ENCODE measurements at regions of chr4 and their contacts with region 1.

Region 1: DNA sequence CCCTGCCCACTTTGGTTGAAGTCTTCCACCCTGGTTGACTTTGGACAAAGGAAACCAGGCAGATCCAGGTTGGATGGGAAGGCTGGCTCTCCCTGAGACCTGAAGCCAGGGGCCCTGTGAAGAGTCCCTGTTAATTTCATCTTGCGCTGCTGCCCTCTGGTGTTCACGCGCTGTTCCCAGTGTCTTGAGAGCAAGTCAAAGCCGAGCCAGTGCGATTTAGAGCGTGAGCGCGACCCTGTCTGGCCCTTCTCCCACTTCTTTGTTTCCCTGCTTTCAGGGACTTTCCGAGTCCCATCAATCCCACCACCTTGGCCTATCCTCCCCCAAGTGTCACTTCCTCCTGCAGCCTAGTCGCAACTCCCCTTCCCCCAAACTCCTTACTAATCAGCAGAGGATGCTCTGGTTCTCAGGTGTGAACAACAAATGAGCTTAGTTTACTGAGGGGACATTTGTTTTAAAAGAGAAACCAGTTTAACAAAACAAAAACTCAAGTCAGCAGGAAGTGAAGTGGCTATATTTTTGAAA is 25.8 kb upstream of the CHRNA9 start:
- DNase-seq: peak; percentile 91
- ATAC-seq: peak; percentile 16
- H3K4me3 ChIP-seq: peak overlapping the region in 3 of 5 experiments; percentile 17 to 41 (median 38)
- H3K4me3 Mint-ChIP-seq: peak overlapping the region; percentile 87
- H3K27ac ChIP-seq: peak overlapping the region; percentile 94 to 98
- H3K27ac Mint-ChIP-seq: peak overlapping the region; percentile 97
- H3K4me1 ChIP-seq: peaks cover 67 to 71% of the 10 kb centered on the region in 2 donors
- H3K4me1 Mint-ChIP-seq: peaks cover 73% of the 10 kb centered on the region
- H3K27me3 ChIP-seq: no peaks in the 10 kb centered on the region
- H3K27me3 Mint-ChIP-seq: no peaks in the 10 kb centered on the region
- CTCF ChIP-seq: peak; percentile 83

Region 2: GRCh38 chr4:38775326-38775725 is 1534.0 kb before region 1 on chr4:
- CTCF ChIA-PET with region 1: no interaction called
- POLR2A ChIA-PET with region 1: no interaction called
- intact Hi-C with region 1: no loop called
- DNase-seq: no peak
- ATAC-seq: no peak
- H3K4me3 ChIP-seq: no peak overlapping the region
- H3K4me3 Mint-ChIP-seq: no peak overlapping the region
- H3K27ac ChIP-seq: peak overlapping the region in 1 of 2 donors; percentile 67
- H3K27ac Mint-ChIP-seq: peak overlapping the region; percentile 22
- H3K4me1 ChIP-seq: peaks cover 33 to 47% of the 10 kb centered on the region in 2 donors
- H3K4me1 Mint-ChIP-seq: peaks cover 73% of the 10 kb centered on the region
- H3K27me3 ChIP-seq: no peaks in the 10 kb centered on the region
- H3K27me3 Mint-ChIP-seq: no peaks in the 10 kb centered on the region
- CTCF ChIP-seq: no peak

Region 3: DNA sequence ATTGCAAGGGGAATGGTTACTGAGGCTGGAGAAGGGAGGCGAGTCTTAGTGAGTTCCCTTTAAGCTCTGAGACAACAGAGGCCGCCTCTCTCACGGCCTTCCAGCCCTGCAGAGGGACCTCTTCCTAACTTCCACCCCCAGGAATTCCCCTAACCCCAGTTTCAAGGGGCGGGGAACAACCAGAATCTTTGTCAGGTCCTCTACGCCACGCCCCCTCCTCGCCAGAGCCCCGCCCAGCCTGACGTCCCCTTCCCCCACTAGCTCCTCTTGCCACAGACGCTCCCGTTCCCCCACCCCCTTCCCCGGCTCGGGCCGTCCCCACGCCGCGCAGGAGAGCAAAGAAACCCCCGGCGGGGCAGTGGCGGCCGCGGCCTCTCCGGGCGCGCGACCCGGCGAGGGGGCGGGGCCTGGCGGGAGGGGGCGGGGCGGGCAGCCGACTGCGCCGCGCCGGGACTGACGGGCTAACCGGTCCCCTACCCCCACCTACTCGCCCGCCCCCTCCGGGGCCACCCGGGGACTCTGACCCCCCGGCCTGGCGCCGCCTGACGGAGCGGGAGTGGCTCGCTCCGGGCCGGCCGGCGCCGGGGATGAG is 1264.9 kb before region 1 on chr4:
- CTCF ChIA-PET with region 1: no interaction called
- POLR2A ChIA-PET with region 1: no interaction called
- intact Hi-C with region 1: loop called (anchors 10 kb)
- DNase-seq: peak; percentile 99
- ATAC-seq: peak; percentile 85
- H3K4me3 ChIP-seq: peak overlapping the region; percentile 66 to 94 (median 75)
- H3K4me3 Mint-ChIP-seq: peak overlapping the region; percentile 80
- H3K27ac ChIP-seq: peak overlapping the region; percentile 93 to 95
- H3K27ac Mint-ChIP-seq: peak overlapping the region; percentile 90
- H3K4me1 ChIP-seq: peaks cover 45 to 48% of the 10 kb centered on the region in 2 donors
- H3K4me1 Mint-ChIP-seq: peaks cover 59% of the 10 kb centered on the region
- H3K27me3 ChIP-seq: no peaks in the 10 kb centered on the region
- H3K27me3 Mint-ChIP-seq: no peaks in the 10 kb centered on the region
- CTCF ChIP-seq: no peak

Region 4: GRCh38 chr4:39706334-39706733 is 603.0 kb before region 1 on chr4:
- CTCF ChIA-PET with region 1: no interaction called
- POLR2A ChIA-PET with region 1: no interaction called
- intact Hi-C with region 1: no loop called
- DNase-seq: no peak
- ATAC-seq: no peak
- H3K4me3 ChIP-seq: no peak overlapping the region
- H3K4me3 Mint-ChIP-seq: no peak overlapping the region
- H3K27ac ChIP-seq: peak overlapping the region in 1 of 2 donors; percentile 46
- H3K27ac Mint-ChIP-seq: peak overlapping the region; percentile 1
- H3K4me1 ChIP-seq: peaks cover 5 to 9% of the 10 kb centered on the region in 2 donors
- H3K4me1 Mint-ChIP-seq: peaks cover 33% of the 10 kb centered on the region
- H3K27me3 ChIP-seq: no peaks in the 10 kb centered on the region
- H3K27me3 Mint-ChIP-seq: no peaks in the 10 kb centered on the region
- CTCF ChIP-seq: no peak

Region 5: GRCh38 chr4:40056716-40057585 is 252.4 kb before region 1 on chr4 and contains the start of gene N4BP2:
- CTCF ChIA-PET with region 1: interaction called, 13 read pairs
- POLR2A ChIA-PET with region 1: interaction called, 5 read pairs
- intact Hi-C with region 1: loop called (anchors 1 kb)
- DNase-seq: peak; percentile 87
- ATAC-seq: peak; percentile 72
- H3K4me3 ChIP-seq: peak within 1 kb of the TSS; percentile 69 to 91 (median 82)
- H3K4me3 Mint-ChIP-seq: peak within 1 kb of the TSS; percentile 95
- H3K27ac ChIP-seq: peak within 1 kb of the TSS; percentile 79 to 84
- H3K27ac Mint-ChIP-seq: peak within 1 kb of the TSS; percentile 94
- H3K4me1 ChIP-seq: peaks cover 14 to 17% of the 10 kb centered on the region in 2 donors
- H3K4me1 Mint-ChIP-seq: peaks cover 27% of the 10 kb centered on the region
- H3K27me3 ChIP-seq: no peaks in the 10 kb centered on the region
- H3K27me3 Mint-ChIP-seq: no peaks in the 10 kb centered on the region
- CTCF ChIP-seq: peak; percentile 83
- total RNA-seq, gene N4BP2: 12.8 and 16.4 TPM in 2 replicates

Region 6: GRCh38 chr4:40199999-40200874 is 109.1 kb before region 1 on chr4:
- CTCF ChIA-PET with region 1: interaction called, 70 read pairs
- POLR2A ChIA-PET with region 1: interaction called, 10 read pairs
- intact Hi-C with region 1: loop called (anchors 1 kb)
- DNase-seq: peak; percentile 63
- ATAC-seq: peak; percentile 19
- H3K4me3 ChIP-seq: peak overlapping the region; percentile 79 to 99 (median 90)
- H3K4me3 Mint-ChIP-seq: peak overlapping the region; percentile 96
- H3K27ac ChIP-seq: peak overlapping the region; percentile 93 to 99
- H3K27ac Mint-ChIP-seq: peak overlapping the region; percentile 91
- H3K4me1 ChIP-seq: peaks cover 53 to 60% of the 10 kb centered on the region in 2 donors
- H3K4me1 Mint-ChIP-seq: peaks cover 64% of the 10 kb centered on the region
- H3K27me3 ChIP-seq: no peaks in the 10 kb centered on the region
- H3K27me3 Mint-ChIP-seq: no peaks in the 10 kb centered on the region
- CTCF ChIP-seq: no peak

Region 7: DNA sequence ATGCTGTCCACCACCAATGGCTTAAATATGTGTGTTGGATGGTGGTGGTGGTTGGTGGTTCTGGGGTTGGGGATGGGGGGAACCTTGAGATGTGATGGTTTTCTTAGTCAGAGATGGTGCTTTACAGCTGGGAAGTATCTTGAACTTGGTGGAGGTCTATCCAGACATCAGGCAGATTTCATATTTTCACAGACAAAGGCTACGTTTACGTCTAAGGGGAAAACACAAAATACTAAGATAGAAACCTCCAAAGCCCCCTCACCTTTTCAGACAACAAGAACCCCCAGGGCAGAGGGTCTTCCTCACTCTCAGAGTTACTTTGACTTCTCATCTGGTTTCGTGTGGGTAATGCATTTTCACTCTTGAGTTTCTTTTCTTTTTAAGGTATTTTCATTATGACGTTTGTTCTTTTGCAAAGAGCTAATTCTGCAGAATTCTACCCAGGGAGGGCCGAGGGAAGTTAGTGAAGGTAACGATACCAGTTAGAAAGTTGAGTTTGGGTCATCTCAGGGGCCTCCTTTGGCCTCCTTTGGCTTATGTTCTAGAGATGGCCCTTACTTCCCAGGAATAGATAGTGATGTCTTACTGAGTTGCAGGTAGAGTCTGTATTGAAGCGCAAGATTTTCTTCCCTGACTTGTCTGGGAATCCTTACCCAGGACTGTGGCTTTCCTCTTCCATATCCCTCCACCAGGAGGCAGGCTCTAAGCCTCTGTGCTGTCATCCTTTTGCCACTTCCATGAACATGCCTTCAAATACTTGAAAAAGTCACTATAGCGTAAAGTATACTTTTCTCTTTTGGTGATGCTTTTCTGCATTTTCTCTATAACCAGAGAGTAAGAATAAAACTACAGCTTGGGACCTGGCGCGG is 80.6 kb before region 1 on chr4:
- CTCF ChIA-PET with region 1: interaction called, 135 read pairs
- POLR2A ChIA-PET with region 1: interaction called, 11 read pairs
- intact Hi-C with region 1: loop called (anchors 2 kb)
- DNase-seq: no peak
- ATAC-seq: no peak
- H3K4me3 ChIP-seq: no peak overlapping the region
- H3K4me3 Mint-ChIP-seq: peak overlapping the region; percentile 57
- H3K27ac ChIP-seq: peak overlapping the region in 1 of 2 donors; percentile 72
- H3K27ac Mint-ChIP-seq: peak overlapping the region; percentile 51
- H3K4me1 ChIP-seq: peaks cover 73 to 90% of the 10 kb centered on the region in 2 donors
- H3K4me1 Mint-ChIP-seq: peaks cover 84% of the 10 kb centered on the region
- H3K27me3 ChIP-seq: no peaks in the 10 kb centered on the region
- H3K27me3 Mint-ChIP-seq: no peaks in the 10 kb centered on the region
- CTCF ChIP-seq: peak; percentile 62

Region 8: GRCh38 chr4:40283968-40284367 is 25.3 kb before region 1 on chr4:
- CTCF ChIA-PET with region 1: interaction called, 43 read pairs
- POLR2A ChIA-PET with region 1: interaction called, 4 read pairs
- intact Hi-C with region 1: loop called (anchors 1 kb)
- DNase-seq: peak; percentile 60
- ATAC-seq: peak; percentile 71
- H3K4me3 ChIP-seq: no peak overlapping the region
- H3K4me3 Mint-ChIP-seq: no peak overlapping the region
- H3K27ac ChIP-seq: no peak overlapping the region
- H3K27ac Mint-ChIP-seq: peak overlapping the region; percentile 63
- H3K4me1 ChIP-seq: peaks cover 24 to 49% of the 10 kb centered on the region in 2 donors
- H3K4me1 Mint-ChIP-seq: peaks cover 56% of the 10 kb centered on the region
- H3K27me3 ChIP-seq: no peaks in the 10 kb centered on the region
- H3K27me3 Mint-ChIP-seq: no peaks in the 10 kb centered on the region
- CTCF ChIP-seq: no peak

Region 9: DNA sequence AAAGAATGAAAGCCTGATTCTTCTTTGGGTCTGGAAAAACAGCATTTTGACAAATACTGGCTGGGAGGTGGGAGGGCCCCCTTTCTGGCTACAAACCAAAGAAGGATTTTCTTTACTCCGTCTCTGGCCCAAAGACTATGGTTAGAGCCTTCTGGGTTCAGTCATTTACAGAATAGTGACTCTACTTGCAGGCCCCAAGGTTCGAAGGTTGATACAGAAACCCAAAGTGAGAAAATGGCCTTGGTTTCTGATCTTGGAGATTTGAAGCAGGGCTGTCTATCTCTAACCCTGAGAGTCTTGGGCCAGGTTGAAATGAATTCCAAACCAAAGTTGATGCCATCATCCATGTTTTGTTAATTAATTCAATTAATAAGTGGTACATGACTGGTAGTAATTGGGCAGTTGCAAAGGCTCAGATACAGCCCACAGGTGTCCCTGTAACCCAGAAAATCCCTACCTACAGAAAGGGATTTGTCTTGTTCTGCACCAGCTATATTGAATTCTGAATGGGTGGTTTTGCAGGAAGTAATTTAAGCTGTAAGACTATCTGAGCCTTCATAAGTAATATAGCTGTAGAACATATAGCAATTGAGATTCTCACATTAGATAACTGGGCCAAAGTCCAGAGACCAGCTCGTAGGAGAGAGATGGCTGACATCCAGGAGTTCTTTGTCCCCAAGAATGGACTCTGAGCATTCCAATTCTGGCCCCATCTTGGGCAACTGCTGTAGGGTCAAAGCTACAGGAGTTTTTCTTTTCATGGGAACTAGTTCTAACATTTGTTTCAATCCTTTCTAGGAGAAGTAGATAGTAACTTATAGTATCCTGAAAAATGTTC is 60.3 kb after region 1 on chr4:
- CTCF ChIA-PET with region 1: no interaction called
- POLR2A ChIA-PET with region 1: no interaction called
- intact Hi-C with region 1: no loop called
- DNase-seq: no peak
- ATAC-seq: no peak
- H3K4me3 ChIP-seq: no peak overlapping the region
- H3K4me3 Mint-ChIP-seq: no peak overlapping the region
- H3K27ac ChIP-seq: no peak overlapping the region
- H3K27ac Mint-ChIP-seq: no peak overlapping the region
- H3K4me1 ChIP-seq: peaks cover 0 to 5% of the 10 kb centered on the region in 2 donors
- H3K4me1 Mint-ChIP-seq: peaks cover 3% of the 10 kb centered on the region
- H3K27me3 ChIP-seq: no peaks in the 10 kb centered on the region
- H3K27me3 Mint-ChIP-seq: no peaks in the 10 kb centered on the region
- CTCF ChIP-seq: no peak

Measured in B cell (primary cell).